ENCODE measurements at regions of chr2 and their contacts with region 1.

Region 1: DNA sequence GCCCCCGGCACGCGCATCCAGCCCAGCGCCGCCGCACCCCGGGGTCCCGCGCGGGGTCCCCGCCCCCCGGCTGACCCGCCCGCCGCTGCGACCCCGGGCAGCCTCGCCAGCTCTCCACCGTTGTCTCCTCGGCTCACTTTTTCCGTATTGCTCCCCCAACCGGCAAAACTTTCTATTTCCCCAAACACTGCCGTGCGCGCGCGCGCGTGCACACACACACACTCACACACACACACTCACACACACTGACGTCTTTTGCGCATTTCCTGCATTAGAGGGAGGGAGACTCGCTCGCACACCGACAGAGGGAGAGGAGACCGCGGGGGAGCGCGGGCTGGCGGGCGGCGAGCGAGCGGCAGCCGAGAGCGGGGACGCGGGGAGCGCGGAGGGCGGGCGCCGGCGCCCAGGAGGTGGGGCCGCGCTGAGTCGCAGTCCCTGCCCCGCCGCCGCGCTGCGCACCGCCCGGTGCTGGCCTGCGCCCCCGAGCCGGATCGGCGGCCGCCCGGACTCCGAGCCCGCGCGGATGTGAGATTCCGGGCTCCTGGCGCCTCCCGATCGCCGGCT is 542 bp upstream of the PRKCE start:
- DNase-seq: peak; percentile 92 to 99 (median 95)
- ATAC-seq: peak; percentile 88
- H3K4me3 ChIP-seq: peak overlapping the region; percentile 83 to 93
- H3K4me3 Mint-ChIP-seq: peak overlapping the region; percentile 96
- H3K27ac ChIP-seq: peak overlapping the region; percentile 74 to 76
- H3K27ac Mint-ChIP-seq: peak overlapping the region; percentile 96
- H3K4me1 ChIP-seq: peaks cover 15% of the 10 kb centered on the region
- H3K4me1 Mint-ChIP-seq: peaks cover 36% of the 10 kb centered on the region
- H3K27me3 ChIP-seq: no peaks in the 10 kb centered on the region
- H3K27me3 Mint-ChIP-seq: no peaks in the 10 kb centered on the region
- CTCF ChIP-seq: peak; percentile 48

Region 2: DNA sequence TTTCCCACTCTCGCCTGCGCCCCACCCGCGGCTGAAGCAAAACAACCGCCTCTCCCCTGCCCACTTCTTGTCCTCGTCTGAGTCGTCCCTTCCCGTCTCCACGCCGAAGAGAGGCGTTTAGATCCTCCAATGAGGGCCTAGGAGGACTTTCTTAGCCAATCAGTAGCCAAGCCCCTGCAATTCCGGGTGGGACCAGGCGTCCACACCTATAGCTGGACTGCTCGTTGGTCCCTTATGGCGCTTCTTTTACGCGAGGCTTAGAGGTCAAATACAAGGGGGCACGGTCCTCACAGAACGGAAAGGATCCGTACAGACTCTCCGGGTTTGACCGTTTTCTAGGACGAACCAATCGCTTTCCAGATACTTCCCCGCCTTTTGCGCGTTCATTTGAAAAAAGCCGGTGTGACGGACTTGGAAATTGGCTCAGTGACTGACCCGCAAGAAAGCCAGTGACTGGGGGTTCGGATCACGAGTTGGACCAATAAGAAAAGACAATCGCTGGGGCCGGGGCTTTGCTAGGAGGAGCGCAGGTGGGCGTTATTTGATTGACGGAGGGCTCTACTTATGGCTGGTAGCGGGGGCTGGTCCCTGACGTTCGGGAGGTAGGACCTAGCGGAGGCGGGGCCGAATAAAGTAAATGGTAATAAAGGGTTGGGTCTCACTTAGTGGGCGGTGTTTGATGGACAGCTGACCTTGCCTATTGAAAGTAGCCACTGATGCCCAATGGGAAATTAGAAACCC is 1482.8 kb before region 1 on chr2:
- CTCF ChIA-PET with region 1: no interaction called
- POLR2A ChIA-PET with region 1: no interaction called
- intact Hi-C with region 1: loop called in 1 of 2 experiments (anchors 2 kb)
- DNase-seq: peak; percentile 92 to 100 (median 96)
- ATAC-seq: peak; percentile 77
- H3K4me3 ChIP-seq: peak overlapping the region; percentile 57 to 79
- H3K4me3 Mint-ChIP-seq: peak overlapping the region; percentile 99
- H3K27ac ChIP-seq: peak overlapping the region; percentile 95 to 97
- H3K27ac Mint-ChIP-seq: peak overlapping the region; percentile 99
- H3K4me1 ChIP-seq: peaks cover 22% of the 10 kb centered on the region
- H3K4me1 Mint-ChIP-seq: peaks cover 38% of the 10 kb centered on the region
- H3K27me3 ChIP-seq: no peaks in the 10 kb centered on the region
- H3K27me3 Mint-ChIP-seq: no peaks in the 10 kb centered on the region
- CTCF ChIP-seq: no peak

Region 3: GRCh38 chr2:45567974-45568789 is 82.8 kb before region 1 on chr2:
- CTCF ChIA-PET with region 1: no interaction called
- POLR2A ChIA-PET with region 1: interaction called, 8 read pairs
- intact Hi-C with region 1: loop called (anchors 1 to 2 kb)
- DNase-seq: peak in 2 of 9 experiments; percentile 82 to 93
- ATAC-seq: peak; percentile 97
- H3K4me3 ChIP-seq: peak overlapping the region; percentile 53 to 55
- H3K4me3 Mint-ChIP-seq: peak overlapping the region; percentile 89
- H3K27ac ChIP-seq: peak overlapping the region; percentile 51 to 93
- H3K27ac Mint-ChIP-seq: peak overlapping the region; percentile 88
- H3K4me1 ChIP-seq: peaks cover 15% of the 10 kb centered on the region
- H3K4me1 Mint-ChIP-seq: peaks cover 27% of the 10 kb centered on the region
- H3K27me3 ChIP-seq: no peaks in the 10 kb centered on the region
- H3K27me3 Mint-ChIP-seq: no peaks in the 10 kb centered on the region
- CTCF ChIP-seq: no peak

Region 4: GRCh38 chr2:45759310-45759851 is 108.4 kb after region 1 on chr2:
- CTCF ChIA-PET with region 1: no interaction called
- POLR2A ChIA-PET with region 1: no interaction called
- intact Hi-C with region 1: no loop called
- DNase-seq: no peak
- ATAC-seq: no peak
- H3K4me3 ChIP-seq: no peak overlapping the region
- H3K4me3 Mint-ChIP-seq: no peak overlapping the region
- H3K27ac ChIP-seq: no peak overlapping the region
- H3K27ac Mint-ChIP-seq: no peak overlapping the region
- H3K4me1 ChIP-seq: no peaks in the 10 kb centered on the region
- H3K4me1 Mint-ChIP-seq: no peaks in the 10 kb centered on the region
- H3K27me3 ChIP-seq: no peaks in the 10 kb centered on the region
- H3K27me3 Mint-ChIP-seq: no peaks in the 10 kb centered on the region
- CTCF ChIP-seq: no peak

Region 5: GRCh38 chr2:45778720-45779171 is 127.8 kb after region 1 on chr2:
- CTCF ChIA-PET with region 1: interaction called, 81 read pairs
- POLR2A ChIA-PET with region 1: interaction called, 5 read pairs
- intact Hi-C with region 1: no loop called
- DNase-seq: peak; percentile 37 to 85 (median 72)
- ATAC-seq: peak; percentile 90
- H3K4me3 ChIP-seq: peak overlapping the region in 1 of 2 experiments; percentile 29
- H3K4me3 Mint-ChIP-seq: peak overlapping the region; percentile 54
- H3K27ac ChIP-seq: no peak overlapping the region
- H3K27ac Mint-ChIP-seq: no peak overlapping the region
- H3K4me1 ChIP-seq: peaks cover 5% of the 10 kb centered on the region
- H3K4me1 Mint-ChIP-seq: peaks cover 5% of the 10 kb centered on the region
- H3K27me3 ChIP-seq: no peaks in the 10 kb centered on the region
- H3K27me3 Mint-ChIP-seq: no peaks in the 10 kb centered on the region
- CTCF ChIP-seq: peak; percentile 93

Region 6: DNA sequence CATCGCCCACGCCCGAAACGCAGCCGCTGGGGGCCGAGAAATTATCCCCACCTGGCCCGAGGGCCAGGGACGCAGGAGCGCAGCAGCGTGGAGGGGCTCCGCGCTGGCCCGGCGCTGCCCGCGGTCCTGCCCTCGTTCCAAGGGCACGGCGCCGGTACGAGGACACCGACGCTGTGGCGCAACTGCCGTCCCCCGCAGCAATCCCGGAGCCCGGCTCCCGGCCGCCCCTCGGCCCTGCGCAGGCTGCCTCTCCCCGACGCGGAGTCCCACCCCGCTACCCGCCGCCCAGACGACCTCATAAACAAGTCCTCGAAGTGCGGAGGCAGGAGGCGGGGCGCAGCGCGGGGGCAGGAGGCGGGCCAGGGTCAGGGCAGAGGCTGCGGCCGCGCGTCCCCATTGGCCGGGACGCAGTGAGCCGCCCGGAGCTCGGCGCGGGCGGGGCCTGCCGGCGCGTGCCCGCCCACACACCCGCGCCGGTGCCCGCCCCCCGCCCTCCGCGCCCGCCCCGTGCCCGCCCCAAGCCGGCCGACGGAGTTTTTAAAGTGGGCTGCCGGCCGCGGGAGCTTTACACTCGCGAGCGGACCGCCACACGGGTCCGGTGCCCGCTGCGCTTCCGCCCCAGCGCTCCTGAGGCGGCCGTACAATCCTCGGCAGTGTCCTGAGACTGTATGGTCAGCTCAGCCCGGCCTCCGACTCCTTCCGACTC is 646.1 kb after region 1 on chr2 and contains the start of gene EPAS1:
- CTCF ChIA-PET with region 1: no interaction called
- POLR2A ChIA-PET with region 1: no interaction called
- intact Hi-C with region 1: loop called in 1 of 2 experiments (anchors 5 kb)
- DNase-seq: peak; percentile 61 to 92 (median 82)
- ATAC-seq: peak; percentile 85
- H3K4me3 ChIP-seq: peak within 1 kb of the TSS; percentile 66 to 80
- H3K4me3 Mint-ChIP-seq: peak within 1 kb of the TSS; percentile 89
- H3K27ac ChIP-seq: peak within 1 kb of the TSS in 1 of 2 experiments; percentile 15
- H3K27ac Mint-ChIP-seq: no peak within 1 kb of the TSS
- H3K4me1 ChIP-seq: peaks cover 26% of the 10 kb centered on the region
- H3K4me1 Mint-ChIP-seq: peaks cover 25% of the 10 kb centered on the region
- H3K27me3 ChIP-seq: peaks cover 26 to 32% of the 10 kb centered on the region in 2 experiments
- H3K27me3 Mint-ChIP-seq: peaks cover 38% of the 10 kb centered on the region
- CTCF ChIP-seq: no peak
- total RNA-seq, gene EPAS1: 18.5 to 19.7 TPM